PC-3 (cell line): ENCODE measurements at regions of chr5 and their contacts with region 1.

Region 1: DNA sequence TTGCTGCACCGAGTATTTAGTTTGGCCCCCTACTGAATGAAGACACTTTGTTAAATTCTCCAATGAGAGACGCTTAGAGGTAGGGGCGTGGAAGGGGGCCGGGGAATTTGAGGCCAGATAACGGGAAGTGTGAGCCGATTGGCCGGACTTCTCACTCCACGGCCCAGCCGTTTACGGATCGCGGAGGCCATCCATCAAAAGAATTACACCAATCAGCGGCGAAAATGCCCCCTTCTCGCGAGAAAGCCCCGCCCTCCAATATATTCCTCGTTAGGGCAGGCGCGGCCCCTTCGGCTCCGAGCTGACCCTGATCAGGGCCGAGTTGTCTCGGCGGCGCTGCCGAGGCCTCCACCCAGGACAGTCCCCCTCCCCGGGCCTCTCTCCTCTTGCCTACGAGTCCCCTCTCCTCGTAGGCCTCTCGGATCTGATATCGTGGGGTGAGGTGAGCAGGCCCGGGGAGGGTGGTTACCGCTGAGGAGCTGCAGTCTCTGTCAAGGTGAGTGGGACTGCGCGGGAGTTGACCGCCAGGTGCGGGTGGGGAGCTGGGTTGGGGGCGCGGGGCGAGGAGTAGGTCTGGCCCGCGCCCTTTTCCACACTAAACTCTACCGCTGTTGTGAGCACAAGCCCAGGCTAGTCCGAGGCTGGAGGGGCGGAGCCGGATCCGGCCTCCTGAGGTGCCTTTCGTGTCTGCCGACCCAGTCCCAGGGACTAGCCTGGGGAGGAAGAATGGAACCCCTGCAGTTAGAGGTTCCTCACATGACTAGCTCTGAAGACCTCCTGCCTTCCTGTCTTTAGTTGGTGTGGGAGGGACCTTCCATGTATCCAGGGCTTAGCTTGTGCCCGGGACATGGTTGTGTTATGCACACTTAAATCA is at the start of gene CCNG1:
- DNase-seq: peak; percentile 97
- ATAC-seq: peak; percentile 92
- H3K4me3 ChIP-seq: peak within 1 kb of the TSS; percentile 98
- H3K27ac ChIP-seq: 0 out of 2 replicates have a peak within 1 kb of the TSS, but pooled peaks have one; percentile 12
- H3K4me1 ChIP-seq: peaks cover 29% of the 10 kb centered on the region
- H3K27me3 ChIP-seq: no peaks in the 10 kb centered on the region
- CTCF ChIP-seq: no peak
- total RNA-seq, gene CCNG1: 60.9 and 70.0 TPM in 2 replicates

Region 2: DNA sequence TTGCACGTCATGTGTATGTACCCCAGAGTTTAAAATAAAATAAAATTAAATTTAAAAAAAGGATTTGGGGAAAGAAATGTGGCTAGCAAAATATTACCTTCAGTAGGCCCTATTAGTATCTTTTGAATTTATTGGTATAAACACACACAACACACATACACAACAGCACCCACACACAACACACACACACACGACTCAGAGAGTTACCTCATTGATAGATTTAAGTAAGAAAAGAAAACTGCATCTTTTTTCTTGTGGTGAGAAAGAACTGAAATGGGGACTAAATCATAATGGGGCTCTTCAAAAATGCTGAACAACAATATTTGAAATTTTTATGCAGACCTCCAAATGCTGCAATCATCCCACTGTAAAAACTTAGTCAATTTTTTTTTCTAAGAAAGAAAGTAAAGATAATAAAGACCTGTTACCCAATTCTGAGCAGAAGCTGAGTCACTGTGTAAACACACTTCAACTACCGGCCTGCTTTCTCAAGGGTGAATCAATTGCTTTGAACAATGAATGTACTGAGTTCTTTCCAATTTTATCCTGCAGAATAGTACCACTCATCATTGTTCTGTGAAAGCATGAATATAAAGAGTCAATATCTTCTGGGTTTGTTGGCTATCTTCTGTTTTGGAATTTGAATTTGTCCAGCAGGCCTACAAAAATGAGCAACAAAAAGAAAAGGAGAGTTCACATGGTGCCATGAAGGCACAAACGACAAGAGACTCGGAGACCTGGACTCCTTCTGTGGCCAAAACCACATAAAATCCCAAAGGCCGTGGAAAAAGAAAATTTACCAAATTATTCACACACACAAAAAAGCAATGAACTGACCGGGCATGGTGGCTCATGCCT is 58.0 kb before region 1 on chr5:
- CTCF ChIA-PET with region 1: no interaction called
- POLR2A ChIA-PET with region 1: no interaction called
- intact Hi-C with region 1: loop called (anchors 1 kb)
- DNase-seq: peak; percentile 94
- ATAC-seq: peak; percentile 91
- H3K4me3 ChIP-seq: peak overlapping the region; percentile 47; the same call in 1 of the 2 replicates
- H3K27ac ChIP-seq: peak overlapping the region; percentile 97
- H3K4me1 ChIP-seq: peaks cover 29% of the 10 kb centered on the region
- H3K27me3 ChIP-seq: no peaks in the 10 kb centered on the region
- CTCF ChIP-seq: no peak

Region 3: GRCh38 chr5:163459922-163460766 is 22.6 kb after region 1 on chr5 and contains the starts of genes HMMR and NUDCD2:
- CTCF ChIA-PET with region 1: interaction called, 3 read pairs
- POLR2A ChIA-PET with region 1: interaction called, 7 read pairs
- intact Hi-C with region 1: loop called (anchors 1 kb)
- DNase-seq: peak; percentile 98
- ATAC-seq: peak; percentile 80
- H3K4me3 ChIP-seq: peak within 1 kb of the TSS; percentile 82
- H3K27ac ChIP-seq: peak within 1 kb of the TSS; percentile 99
- H3K4me1 ChIP-seq: peaks cover 13% of the 10 kb centered on the region
- H3K27me3 ChIP-seq: no peaks in the 10 kb centered on the region
- CTCF ChIP-seq: peak; percentile 49; the same call in 1 of the 2 replicates
- total RNA-seq, gene HMMR: 44.8 and 74.6 TPM in 2 replicates
- total RNA-seq, gene NUDCD2: 28.3 and 31.2 TPM in 2 replicates